OCI-LY7 (cell line): ENCODE measurements at regions of chr7 and their contacts with region 1.

Region 1: DNA sequence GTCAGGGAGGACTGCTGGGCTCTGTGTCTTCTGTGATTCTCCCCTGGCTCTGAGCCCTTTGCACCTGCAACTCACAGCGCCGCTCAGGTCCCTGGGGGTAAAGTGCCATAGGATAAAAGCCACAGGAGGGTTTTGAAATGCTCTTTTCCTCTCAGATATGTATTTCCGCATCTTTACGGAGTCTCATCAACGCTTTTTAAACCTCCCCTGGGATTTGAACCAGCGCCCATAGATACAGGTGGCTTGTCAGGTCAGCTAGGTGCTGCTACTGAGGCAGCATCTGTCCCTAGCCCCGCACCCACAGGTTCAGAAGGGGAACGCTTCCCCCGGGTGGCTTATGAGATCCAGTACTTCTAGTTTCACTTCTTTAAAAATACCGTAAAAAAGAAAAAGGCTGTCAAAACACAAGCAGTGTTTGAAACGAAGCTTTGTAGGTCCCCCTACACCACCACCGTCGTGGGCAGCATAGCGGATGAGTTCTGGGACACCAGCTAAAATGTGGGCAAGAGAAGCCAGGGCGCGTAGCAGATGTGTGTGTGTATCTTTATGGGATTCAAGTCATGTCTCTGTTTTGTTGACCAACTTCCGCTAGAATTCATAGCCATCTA is 173.5 kb downstream of the CUX1 start:
- DNase-seq: peak; percentile 100
- H3K4me3 ChIP-seq: peak overlapping the region; percentile 58
- H3K27ac ChIP-seq: peak overlapping the region; percentile 97
- H3K4me1 ChIP-seq: peaks cover 97% of the 10 kb centered on the region
- CTCF ChIP-seq: peak; percentile 56; the same call in 1 of the 2 replicates

Region 2: GRCh38 chr7:101486433-101487104 is 504.3 kb before region 1 on chr7:
- CTCF ChIA-PET with region 1: no interaction called
- POLR2A ChIA-PET with region 1: no interaction called
- intact Hi-C with region 1: no loop called
- DNase-seq: no peak
- H3K4me3 ChIP-seq: no peak overlapping the region
- H3K27ac ChIP-seq: no peak overlapping the region
- H3K4me1 ChIP-seq: no peaks in the 10 kb centered on the region
- CTCF ChIP-seq: no peak

Region 3: DNA sequence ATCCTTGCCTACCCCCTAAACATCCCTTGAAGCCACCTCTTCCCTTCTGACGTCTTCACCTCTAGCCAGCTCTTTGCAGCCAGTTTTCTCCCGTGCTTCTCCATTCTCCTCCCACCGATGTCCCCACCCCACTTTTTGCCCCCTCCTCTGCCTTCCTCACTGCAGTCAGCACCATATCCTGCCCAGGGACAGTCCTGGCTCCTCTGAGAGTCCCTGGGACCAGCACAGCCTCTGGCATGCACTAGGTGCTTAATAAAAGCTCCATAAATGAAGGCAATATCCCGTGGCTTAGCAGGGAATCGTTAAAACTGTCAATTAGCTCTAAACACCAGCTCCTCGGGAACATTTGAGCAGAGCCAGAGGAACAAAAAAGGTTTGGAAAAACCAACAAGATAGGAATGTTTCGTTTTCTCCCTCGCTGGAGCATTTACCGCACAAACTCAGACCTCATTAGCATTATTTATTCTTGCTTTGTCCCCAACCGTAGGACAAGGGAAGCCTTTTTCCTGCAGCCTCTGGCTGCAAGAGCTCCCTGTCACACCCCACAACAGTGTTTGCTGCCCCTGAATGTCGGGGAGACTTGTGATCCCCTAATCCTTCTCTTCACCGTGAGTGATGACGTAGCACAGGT is 377.9 kb before region 1 on chr7:
- CTCF ChIA-PET with region 1: no interaction called
- POLR2A ChIA-PET with region 1: no interaction called
- intact Hi-C with region 1: no loop called
- DNase-seq: no peak
- H3K4me3 ChIP-seq: no peak overlapping the region
- H3K27ac ChIP-seq: no peak overlapping the region
- H3K4me1 ChIP-seq: no peaks in the 10 kb centered on the region
- CTCF ChIP-seq: no peak

Region 4: DNA sequence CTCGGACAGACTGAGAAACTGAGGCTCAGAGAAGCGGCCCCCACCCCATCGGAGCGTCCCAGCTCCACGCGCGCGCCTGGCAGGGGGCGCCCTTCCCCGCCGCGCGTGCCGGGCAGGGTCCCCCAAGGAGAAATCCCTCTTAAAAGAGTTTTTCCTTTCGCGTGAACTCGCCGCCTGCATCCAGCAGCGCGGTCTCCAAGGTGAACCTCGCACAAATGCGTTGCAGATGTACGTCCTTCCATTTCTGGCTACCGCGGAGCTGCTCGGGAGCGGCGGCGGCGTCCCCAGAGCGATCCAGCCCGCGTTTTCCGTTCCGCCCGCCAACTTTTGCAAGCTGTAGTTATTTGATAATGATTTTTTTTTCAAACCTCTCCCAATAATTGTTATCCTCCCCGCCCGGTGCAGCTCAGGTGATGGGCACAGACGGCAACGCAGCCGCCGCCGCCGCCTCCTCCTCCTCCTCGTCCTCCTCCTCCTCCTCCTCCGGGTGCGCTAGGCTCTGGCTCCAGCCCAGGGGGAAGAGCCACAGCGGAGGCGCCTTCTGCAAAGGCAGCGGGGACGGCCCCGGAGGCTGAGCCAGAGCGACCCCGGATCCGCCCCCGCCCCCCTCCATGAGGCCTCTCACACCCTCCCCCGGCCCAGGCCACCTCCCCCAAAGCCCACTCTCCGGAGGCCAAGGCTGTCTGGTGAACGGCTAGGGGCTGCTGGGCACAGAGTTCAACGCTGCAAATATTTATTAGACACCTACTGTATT is 247.5 kb before region 1 on chr7:
- CTCF ChIA-PET with region 1: no interaction called
- POLR2A ChIA-PET with region 1: interaction called, 4 read pairs
- intact Hi-C with region 1: loop called (anchors 2 kb)
- DNase-seq: peak; percentile 84
- H3K4me3 ChIP-seq: peak overlapping the region; percentile 76
- H3K27ac ChIP-seq: peak overlapping the region; percentile 93
- H3K4me1 ChIP-seq: peaks cover 80% of the 10 kb centered on the region
- CTCF ChIP-seq: peak; percentile 83

Region 5: GRCh38 chr7:101856473-101857357 is 134.2 kb before region 1 on chr7:
- CTCF ChIA-PET with region 1: interaction called, 3 read pairs
- POLR2A ChIA-PET with region 1: interaction called, 15 read pairs
- intact Hi-C with region 1: loop called (anchors 2 kb)
- DNase-seq: peak; percentile 92
- H3K4me3 ChIP-seq: peak overlapping the region; percentile 74
- H3K27ac ChIP-seq: peak overlapping the region; percentile 97
- H3K4me1 ChIP-seq: peaks cover 97% of the 10 kb centered on the region
- CTCF ChIP-seq: peak; percentile 73

Region 6: GRCh38 chr7:101884671-101885596 is 106.0 kb before region 1 on chr7:
- CTCF ChIA-PET with region 1: no interaction called
- POLR2A ChIA-PET with region 1: interaction called, 4 read pairs
- intact Hi-C with region 1: loop called (anchors 2 kb)
- DNase-seq: peak; percentile 91
- H3K4me3 ChIP-seq: peak overlapping the region; percentile 61
- H3K27ac ChIP-seq: peak overlapping the region; percentile 93
- H3K4me1 ChIP-seq: peaks cover 100% of the 10 kb centered on the region
- CTCF ChIP-seq: no peak

Region 7: DNA sequence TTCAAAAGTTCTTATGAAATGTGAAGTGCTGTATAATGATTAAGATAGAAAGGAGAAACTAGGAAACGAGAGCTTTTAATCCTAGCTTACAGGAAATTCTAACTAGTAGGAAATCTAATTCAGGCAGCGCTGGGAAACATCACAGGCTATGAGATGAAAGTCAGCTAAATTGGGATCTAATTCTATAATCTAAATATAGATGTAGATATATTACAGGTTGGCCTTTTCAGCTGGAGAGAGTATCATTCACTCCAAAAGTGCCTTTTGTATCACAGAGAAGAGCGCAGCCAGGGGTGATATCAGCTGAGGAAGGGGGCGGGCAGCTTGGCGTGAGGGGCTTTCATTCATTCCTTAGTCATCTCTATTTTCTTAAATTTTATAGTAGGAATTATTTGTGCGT is 16.5 kb before region 1 on chr7:
- CTCF ChIA-PET with region 1: interaction called, 3 read pairs
- POLR2A ChIA-PET with region 1: interaction called, 14 read pairs
- intact Hi-C with region 1: no loop called
- DNase-seq: no peak
- H3K4me3 ChIP-seq: no peak overlapping the region
- H3K27ac ChIP-seq: peak overlapping the region; percentile 40
- H3K4me1 ChIP-seq: peaks cover 54% of the 10 kb centered on the region
- CTCF ChIP-seq: no peak

Region 8: DNA sequence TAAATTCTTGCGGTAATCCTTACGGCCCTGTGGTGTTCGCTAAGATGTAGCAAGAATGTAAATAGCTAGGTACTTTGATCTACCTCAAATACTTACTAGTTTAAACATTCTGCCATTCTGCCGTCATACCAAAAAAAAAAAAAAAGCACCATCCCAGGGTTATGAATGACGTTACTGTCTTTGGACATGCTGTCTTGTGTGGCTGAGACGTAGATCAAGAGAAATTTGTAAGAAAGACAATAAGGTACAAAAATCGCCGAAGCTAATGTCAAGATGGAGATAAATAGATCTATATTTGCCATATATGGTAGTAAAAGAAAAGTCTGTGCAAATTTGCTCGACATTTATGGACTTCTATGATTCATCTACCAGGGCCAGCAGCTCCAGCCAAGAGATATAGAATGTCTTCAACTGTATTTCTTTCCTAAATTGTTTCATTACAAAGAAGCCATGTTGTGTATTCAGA is 22.1 kb after region 1 on chr7:
- CTCF ChIA-PET with region 1: no interaction called
- POLR2A ChIA-PET with region 1: no interaction called
- intact Hi-C with region 1: no loop called
- DNase-seq: no peak
- H3K4me3 ChIP-seq: no peak overlapping the region
- H3K27ac ChIP-seq: no peak overlapping the region
- H3K4me1 ChIP-seq: no peaks in the 10 kb centered on the region
- CTCF ChIP-seq: no peak

Region 9: GRCh38 chr7:102230593-102230992 is 239.7 kb after region 1 on chr7:
- CTCF ChIA-PET with region 1: no interaction called
- POLR2A ChIA-PET with region 1: no interaction called
- intact Hi-C with region 1: no loop called
- DNase-seq: no peak
- H3K4me3 ChIP-seq: no peak overlapping the region
- H3K27ac ChIP-seq: no peak overlapping the region
- H3K4me1 ChIP-seq: no peaks in the 10 kb centered on the region
- CTCF ChIP-seq: no peak

Region 10: GRCh38 chr7:102244586-102244985 is 253.7 kb after region 1 on chr7:
- CTCF ChIA-PET with region 1: no interaction called
- POLR2A ChIA-PET with region 1: no interaction called
- intact Hi-C with region 1: loop called (anchors 5 kb)
- DNase-seq: no peak
- H3K4me3 ChIP-seq: no peak overlapping the region
- H3K27ac ChIP-seq: no peak overlapping the region
- H3K4me1 ChIP-seq: peaks cover 10% of the 10 kb centered on the region
- CTCF ChIP-seq: no peak